ENCODE measurements at regions of chr2 and their contacts with region 1.

Region 1: GRCh38 chr2:200479692-200480265 is 30.1 kb downstream of the KCTD18 start:
- DNase-seq: no peak
- H3K4me3 ChIP-seq: no peak overlapping the region
- H3K27ac ChIP-seq: no peak overlapping the region
- H3K4me1 ChIP-seq: no peaks in the 10 kb centered on the region
- H3K27me3 ChIP-seq: no peaks in the 10 kb centered on the region
- CTCF ChIP-seq: no peak

Region 2: GRCh38 chr2:199979832-199980628 is 499.7 kb before region 1 on chr2:
- intact Hi-C with region 1: loop called (anchors 2 kb)
- DNase-seq: peak in 1 of 2 donors; percentile 89
- H3K4me3 ChIP-seq: peak overlapping the region in 1 of 2 donors; percentile 20
- H3K27ac ChIP-seq: no peak overlapping the region
- H3K4me1 ChIP-seq: no peaks in the 10 kb centered on the region
- H3K27me3 ChIP-seq: no peaks in the 10 kb centered on the region
- CTCF ChIP-seq: peak; percentile 76 to 87 (median 79)

Measured in ascending aorta (tissue), 2 donors.